ENCODE measurements at regions of chr14 and their contacts with region 1.

Region 1: GRCh38 chr14:73173092-73173735 is 36.9 kb downstream of the PSEN1 start:
- DNase-seq: no peak

Region 2: DNA sequence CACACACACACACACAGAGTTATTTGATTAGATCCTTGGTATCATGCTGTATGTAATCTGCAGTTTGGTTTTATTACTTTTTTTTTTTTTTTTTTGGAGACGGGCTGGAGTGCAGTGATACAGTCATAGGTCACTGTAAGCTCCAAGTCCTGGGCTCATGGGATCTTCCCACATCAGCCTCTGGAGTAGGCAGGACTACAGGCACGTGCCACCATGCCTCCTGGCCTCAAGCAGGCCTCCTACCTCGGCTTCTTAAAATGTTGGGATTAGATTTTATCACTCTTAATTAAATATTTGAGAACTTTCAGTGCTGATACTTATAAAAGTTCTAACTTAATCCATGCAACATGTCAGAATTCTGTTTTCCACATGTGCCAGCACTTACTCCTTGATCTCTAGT is 68.2 kb before region 1 on chr14:
- intact Hi-C with region 1: no loop called
- DNase-seq: no peak

Region 3: GRCh38 chr14:73136387-73137225 is 36.6 kb before region 1 on chr14 and contains the start of gene PSEN1:
- intact Hi-C with region 1: loop called (anchors 5 kb)
- DNase-seq: peak; percentile 95 to 100 (median 99)

Region 4: GRCh38 chr14:73283608-73284379 is 110.6 kb after region 1 on chr14:
- intact Hi-C with region 1: loop called (anchors 5 kb)
- DNase-seq: peak in 3 of 10 donors; percentile 26 to 84 (median 42)

Region 5: GRCh38 chr14:73472185-73473114 is 299.2 kb after region 1 on chr14:
- intact Hi-C with region 1: loop called (anchors 5 kb)
- DNase-seq: no peak